ENCODE measurements at regions of chr6 and their contacts with region 1.

Region 1: DNA sequence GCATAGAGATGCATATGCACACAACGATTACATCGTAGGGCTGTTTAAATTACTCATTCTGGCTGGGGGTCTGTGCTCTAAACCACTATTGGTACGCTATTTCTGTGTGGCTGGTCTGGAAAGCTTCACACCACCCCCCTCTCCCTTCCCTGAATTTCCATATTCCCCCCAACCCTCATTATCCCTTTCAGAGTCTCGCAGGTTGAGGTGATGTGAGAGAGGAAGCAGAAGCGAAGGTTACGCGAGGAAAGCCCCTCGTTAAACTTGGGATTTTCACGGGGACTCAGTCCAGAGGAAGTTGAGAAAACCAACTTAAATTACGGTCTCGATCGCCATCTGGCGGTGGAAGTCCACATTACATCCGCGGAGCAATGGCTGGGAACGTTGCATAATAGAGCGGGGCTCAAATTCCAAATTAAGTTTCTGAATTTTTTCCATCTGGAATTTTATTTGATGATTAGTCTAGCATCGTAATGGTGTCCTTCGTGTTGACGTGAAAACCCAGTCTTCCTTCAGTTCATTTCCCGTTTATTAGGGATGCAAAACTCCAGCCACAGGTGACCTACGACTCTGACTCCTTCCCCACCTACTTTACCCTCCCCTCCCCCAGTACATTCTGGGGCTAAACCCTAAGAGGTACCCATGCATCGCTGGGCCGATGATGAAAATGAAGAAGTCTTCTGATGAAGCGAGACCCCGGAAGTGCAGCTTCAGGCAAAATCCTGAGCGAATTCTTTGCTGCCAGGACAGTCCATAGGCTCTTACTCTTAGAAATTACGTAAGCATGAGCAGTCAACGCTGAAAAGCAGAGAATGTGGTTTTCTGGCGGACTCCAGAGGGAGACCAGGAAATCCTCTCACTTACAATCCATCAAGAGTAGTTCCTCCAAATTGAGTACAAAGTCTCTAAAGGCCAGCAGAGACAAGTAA is 19.7 kb downstream of the HLA-DOB start:
- DNase-seq: peak; percentile 93
- H3K4me3 Mint-ChIP-seq: peak overlapping the region; percentile 74
- H3K27ac Mint-ChIP-seq: no peak overlapping the region
- H3K4me1 Mint-ChIP-seq: peaks cover 31% of the 10 kb centered on the region
- H3K27me3 Mint-ChIP-seq: peaks cover 62% of the 10 kb centered on the region

Region 2: GRCh38 chr6:32244946-32245398 is 552.1 kb before region 1 on chr6:
- intact Hi-C with region 1: loop called (anchors 10 kb)
- DNase-seq: peak; percentile 91
- H3K4me3 Mint-ChIP-seq: peak overlapping the region; percentile 44
- H3K27ac Mint-ChIP-seq: no peak overlapping the region
- H3K4me1 Mint-ChIP-seq: peaks cover 24% of the 10 kb centered on the region
- H3K27me3 Mint-ChIP-seq: peaks cover 27% of the 10 kb centered on the region

Region 3: DNA sequence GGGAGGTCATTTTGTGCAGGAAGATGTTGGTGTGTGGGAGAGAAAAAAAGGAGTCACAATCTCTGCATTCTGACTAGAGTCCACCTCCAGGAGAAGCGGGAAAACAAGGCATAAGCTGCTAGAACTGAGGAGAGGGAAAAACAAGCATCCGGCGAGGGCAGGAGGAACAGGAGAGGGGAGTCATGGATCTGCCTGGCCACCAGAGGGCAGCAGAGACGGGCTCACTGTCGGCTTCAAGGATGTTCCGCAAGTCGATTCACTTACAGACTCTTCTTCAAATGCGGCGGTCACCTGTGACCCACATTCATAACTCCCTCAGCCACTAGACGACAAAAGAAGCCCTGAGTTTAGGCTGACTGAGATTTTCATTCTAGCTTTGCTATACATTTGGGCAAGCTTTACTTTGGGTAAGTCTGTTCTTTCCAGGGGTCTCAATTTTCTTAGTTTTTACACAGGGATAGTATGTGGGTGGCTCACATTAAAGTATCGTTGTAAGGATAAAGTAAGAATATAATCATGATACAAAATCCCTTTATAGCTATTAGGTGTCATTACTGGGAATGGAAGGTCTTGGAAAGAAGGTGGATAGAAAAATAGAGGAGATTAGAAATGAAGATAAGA is 383.6 kb before region 1 on chr6:
- intact Hi-C with region 1: loop called (anchors 1 kb)
- DNase-seq: peak; percentile 94
- H3K4me3 Mint-ChIP-seq: no peak overlapping the region
- H3K27ac Mint-ChIP-seq: no peak overlapping the region
- H3K4me1 Mint-ChIP-seq: peaks cover 8% of the 10 kb centered on the region
- H3K27me3 Mint-ChIP-seq: peaks cover 52% of the 10 kb centered on the region

Region 4: DNA sequence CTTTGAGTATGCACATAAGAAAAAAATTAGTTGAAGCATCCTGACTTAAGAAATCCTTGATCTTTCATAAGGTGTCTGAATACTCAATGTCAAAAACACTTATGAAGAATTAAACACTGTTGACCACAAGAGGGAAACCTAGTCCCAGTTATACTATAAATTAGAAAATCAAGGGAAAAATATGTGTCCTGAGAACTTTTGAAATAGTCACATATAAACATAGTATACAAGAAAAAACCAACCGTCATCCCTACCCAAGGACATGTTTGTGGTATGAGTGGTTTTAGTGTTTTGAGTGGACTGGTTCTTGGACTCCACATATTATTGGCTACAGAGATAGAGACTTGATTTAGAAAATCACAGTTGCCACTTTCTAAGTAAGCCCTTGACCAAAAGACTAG is 365.1 kb before region 1 on chr6:
- intact Hi-C with region 1: loop called (anchors 5 kb)
- DNase-seq: no peak
- H3K4me3 Mint-ChIP-seq: no peak overlapping the region
- H3K27ac Mint-ChIP-seq: no peak overlapping the region
- H3K4me1 Mint-ChIP-seq: no peaks in the 10 kb centered on the region
- H3K27me3 Mint-ChIP-seq: peaks cover 32% of the 10 kb centered on the region

Region 5: DNA sequence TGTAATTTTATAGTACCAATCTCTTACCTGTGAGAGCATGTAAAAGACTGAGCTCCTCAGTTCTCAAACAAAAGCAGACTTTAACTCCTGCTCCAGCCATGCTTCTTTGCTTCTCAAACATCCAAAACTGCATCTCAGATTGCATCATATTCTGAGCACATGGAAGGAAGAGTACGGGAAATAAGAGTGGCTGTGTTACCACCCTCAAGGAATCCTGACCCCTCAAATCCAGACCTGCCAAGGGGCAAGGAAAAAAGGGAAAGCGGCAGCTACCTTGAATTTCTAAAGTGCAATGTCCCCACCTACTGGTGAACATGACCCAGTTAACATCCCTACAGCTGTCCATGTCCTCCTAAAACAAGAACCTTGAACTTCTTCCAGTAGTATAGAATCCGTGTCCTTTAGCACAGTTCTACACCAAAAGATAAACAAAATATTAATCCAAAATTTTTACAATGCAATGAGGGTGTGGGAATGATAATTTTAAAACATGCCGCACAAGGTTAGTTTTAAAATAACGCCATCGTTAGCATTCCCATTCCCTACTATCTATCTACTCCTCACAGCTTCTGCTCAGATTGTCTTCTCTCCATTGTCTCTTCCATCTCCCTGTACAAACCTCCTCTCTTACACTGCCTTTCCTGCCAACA is 96.6 kb before region 1 on chr6:
- intact Hi-C with region 1: loop called (anchors 5 kb)
- DNase-seq: peak; percentile 75
- H3K4me3 Mint-ChIP-seq: no peak overlapping the region
- H3K27ac Mint-ChIP-seq: no peak overlapping the region
- H3K4me1 Mint-ChIP-seq: peaks cover 2% of the 10 kb centered on the region
- H3K27me3 Mint-ChIP-seq: peaks cover 66% of the 10 kb centered on the region

Region 6: GRCh38 chr6:32763427-32763826 is 33.7 kb before region 1 on chr6 and contains the start of gene HLA-DQB2:
- intact Hi-C with region 1: no loop called
- DNase-seq: no peak
- H3K4me3 Mint-ChIP-seq: no peak within 1 kb of the TSS
- H3K27ac Mint-ChIP-seq: no peak within 1 kb of the TSS
- H3K4me1 Mint-ChIP-seq: no peaks in the 10 kb centered on the region
- H3K27me3 Mint-ChIP-seq: peaks cover 57% of the 10 kb centered on the region
- total RNA-seq, gene HLA-DQB2: 0.28 and 0.72 TPM in 2 replicates